CD14-positive monocyte (primary cell): ENCODE measurements at regions of chr7 and their contacts with region 1.

Region 1: DNA sequence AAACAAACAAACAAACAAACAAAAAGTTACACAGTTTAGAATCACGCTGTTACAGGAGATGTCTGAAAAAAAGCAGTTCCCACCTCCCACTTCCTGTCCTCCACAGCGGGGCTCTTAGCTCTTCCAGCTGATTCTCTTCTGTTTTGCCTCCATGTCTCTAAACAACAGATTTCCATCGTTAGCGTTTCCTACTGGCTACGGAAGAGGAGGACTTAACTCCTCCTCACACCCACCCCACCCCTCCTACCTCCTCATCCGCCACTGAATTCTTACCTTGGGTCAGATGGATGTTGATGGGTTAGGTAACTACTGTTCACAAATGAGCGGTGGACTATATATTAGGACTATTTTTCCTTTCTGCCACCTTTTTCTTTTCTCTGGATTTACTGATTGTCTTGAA is 36.8 kb upstream of the NUB1 start:
- DNase-seq: no peak
- H3K4me3 ChIP-seq: no peak overlapping the region
- H3K4me3 Mint-ChIP-seq: peak overlapping the region in 1 of 2 donors; percentile 80
- H3K27ac ChIP-seq: no peak overlapping the region
- H3K27ac Mint-ChIP-seq: no peak overlapping the region
- H3K4me1 ChIP-seq: peaks cover 4 to 7% of the 10 kb centered on the region in 2 donors
- H3K4me1 Mint-ChIP-seq: peaks cover 7% of the 10 kb centered on the region
- H3K27me3 ChIP-seq: peaks cover 10 to 51% of the 10 kb centered on the region in 2 donors
- H3K27me3 Mint-ChIP-seq: peaks cover 40 to 48% (median 43%) of the 10 kb centered on the region in 3 donors
- CTCF ChIP-seq: no peak

Region 2: GRCh38 chr7:151008511-151009323 is 296.1 kb before region 1 on chr7:
- intact Hi-C with region 1: no loop called
- DNase-seq: peak; percentile 33 to 51 (median 41)
- H3K4me3 ChIP-seq: no peak overlapping the region
- H3K4me3 Mint-ChIP-seq: peak overlapping the region; percentile 50 to 52
- H3K27ac ChIP-seq: no peak overlapping the region
- H3K27ac Mint-ChIP-seq: no peak overlapping the region
- H3K4me1 ChIP-seq: peaks cover 24 to 39% of the 10 kb centered on the region in 2 donors
- H3K4me1 Mint-ChIP-seq: peaks cover 35% of the 10 kb centered on the region
- H3K27me3 ChIP-seq: peaks cover 2 to 39% of the 10 kb centered on the region in 2 donors
- H3K27me3 Mint-ChIP-seq: peaks cover 40 to 70% (median 44%) of the 10 kb centered on the region in 3 donors
- CTCF ChIP-seq: peak; percentile 88

Region 3: GRCh38 chr7:151123822-151124464 is 180.9 kb before region 1 on chr7:
- intact Hi-C with region 1: loop called (anchors 2 to 5 kb)
- DNase-seq: peak; percentile 53 to 72 (median 69)
- H3K4me3 ChIP-seq: no peak overlapping the region
- H3K4me3 Mint-ChIP-seq: no peak overlapping the region
- H3K27ac ChIP-seq: no peak overlapping the region
- H3K27ac Mint-ChIP-seq: no peak overlapping the region
- H3K4me1 ChIP-seq: no peaks in the 10 kb centered on the region
- H3K4me1 Mint-ChIP-seq: no peaks in the 10 kb centered on the region
- H3K27me3 ChIP-seq: no peaks in the 10 kb centered on the region
- H3K27me3 Mint-ChIP-seq: peaks cover 2 to 15% (median 3%) of the 10 kb centered on the region in 3 donors
- CTCF ChIP-seq: peak; percentile 93

Region 4: DNA sequence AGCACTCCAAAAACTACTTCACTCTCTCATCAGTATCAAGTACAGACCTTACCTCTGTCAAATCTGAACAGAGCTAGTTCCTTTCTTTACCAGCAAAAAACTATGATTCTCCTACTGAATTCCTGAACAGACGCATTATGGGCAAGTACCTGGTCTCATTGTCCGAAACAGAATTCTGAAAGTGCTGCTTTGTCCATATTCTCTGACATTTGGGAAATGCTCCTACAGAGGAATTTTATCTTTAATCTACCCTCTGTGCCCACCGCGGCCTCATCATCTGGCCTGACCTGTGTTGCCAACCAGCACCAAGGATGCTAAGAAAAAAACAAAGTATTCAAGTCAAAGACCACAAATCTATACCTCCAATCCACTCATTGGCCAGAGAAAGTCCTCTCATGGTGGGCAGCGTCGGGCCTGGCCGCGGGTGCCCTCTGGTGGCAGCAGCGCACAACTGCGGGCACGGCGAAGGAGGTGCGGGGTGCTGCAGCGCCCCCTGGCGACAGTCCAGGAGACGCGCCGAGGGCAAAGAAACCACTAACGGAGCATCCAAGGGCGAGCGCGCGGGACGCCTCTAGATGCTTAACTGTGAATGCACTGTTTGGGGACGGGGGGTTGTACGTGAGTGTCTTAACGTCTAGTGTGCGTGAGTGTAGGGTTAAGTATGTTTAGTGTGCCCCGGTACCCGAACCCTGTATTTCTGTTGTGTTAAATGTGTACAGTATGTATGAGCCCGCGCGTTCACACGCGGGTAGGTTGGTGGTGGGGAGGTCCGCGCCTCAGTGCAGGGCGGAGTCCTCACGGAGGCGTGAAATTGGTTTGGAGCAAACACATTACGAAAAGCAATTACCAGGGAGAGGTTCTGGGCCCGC is 132.3 kb before region 1 on chr7:
- intact Hi-C with region 1: loop called in 1 of 2 experiments (anchors 10 kb)
- DNase-seq: peak; percentile 72 to 81 (median 76)
- H3K4me3 ChIP-seq: no peak overlapping the region
- H3K4me3 Mint-ChIP-seq: peak overlapping the region in 1 of 2 donors; percentile 67
- H3K27ac ChIP-seq: no peak overlapping the region
- H3K27ac Mint-ChIP-seq: no peak overlapping the region
- H3K4me1 ChIP-seq: peaks cover 2 to 9% of the 10 kb centered on the region in 2 donors
- H3K4me1 Mint-ChIP-seq: peaks cover 9% of the 10 kb centered on the region
- H3K27me3 ChIP-seq: peaks cover 23 to 61% of the 10 kb centered on the region in 2 donors
- H3K27me3 Mint-ChIP-seq: peaks cover 50 to 80% (median 52%) of the 10 kb centered on the region in 3 donors
- CTCF ChIP-seq: peak; percentile 100

Region 5: GRCh38 chr7:151248346-151249033 is 56.4 kb before region 1 on chr7 and contains the start of gene SMARCD3:
- intact Hi-C with region 1: loop called (anchors 5 kb)
- DNase-seq: no peak
- H3K4me3 ChIP-seq: peak within 1 kb of the TSS; percentile 11 to 63 (median 27)
- H3K4me3 Mint-ChIP-seq: peak within 1 kb of the TSS; percentile 82 to 96
- H3K27ac ChIP-seq: no peak within 1 kb of the TSS
- H3K27ac Mint-ChIP-seq: peak within 1 kb of the TSS in 3 of 7 donors; percentile 42 to 60 (median 46)
- H3K4me1 ChIP-seq: peaks cover 51 to 64% of the 10 kb centered on the region in 2 donors
- H3K4me1 Mint-ChIP-seq: peaks cover 73% of the 10 kb centered on the region
- H3K27me3 ChIP-seq: peaks cover 61 to 82% of the 10 kb centered on the region in 2 donors
- H3K27me3 Mint-ChIP-seq: peaks cover 77 to 95% (median 82%) of the 10 kb centered on the region in 3 donors
- CTCF ChIP-seq: no peak
- polyA plus RNA-seq, gene SMARCD3: 104 to 183 (median 112) TPM